IMR-90 (cell line): ENCODE measurements at regions of chr6 and their contacts with region 1.

Region 1: GRCh38 chr6:39664173-39664572 is 61.0 kb downstream of the KIF6 start:
- DNase-seq: no peak
- ATAC-seq: no peak
- H3K4me3 ChIP-seq: no peak overlapping the region
- H3K27ac ChIP-seq: no peak overlapping the region
- H3K4me1 ChIP-seq: no peaks in the 10 kb centered on the region
- H3K27me3 ChIP-seq: no peaks in the 10 kb centered on the region
- CTCF ChIP-seq: no peak
- POLR2A ChIP-seq: no peak
- RAD21 ChIP-seq: no peak

Region 2: DNA sequence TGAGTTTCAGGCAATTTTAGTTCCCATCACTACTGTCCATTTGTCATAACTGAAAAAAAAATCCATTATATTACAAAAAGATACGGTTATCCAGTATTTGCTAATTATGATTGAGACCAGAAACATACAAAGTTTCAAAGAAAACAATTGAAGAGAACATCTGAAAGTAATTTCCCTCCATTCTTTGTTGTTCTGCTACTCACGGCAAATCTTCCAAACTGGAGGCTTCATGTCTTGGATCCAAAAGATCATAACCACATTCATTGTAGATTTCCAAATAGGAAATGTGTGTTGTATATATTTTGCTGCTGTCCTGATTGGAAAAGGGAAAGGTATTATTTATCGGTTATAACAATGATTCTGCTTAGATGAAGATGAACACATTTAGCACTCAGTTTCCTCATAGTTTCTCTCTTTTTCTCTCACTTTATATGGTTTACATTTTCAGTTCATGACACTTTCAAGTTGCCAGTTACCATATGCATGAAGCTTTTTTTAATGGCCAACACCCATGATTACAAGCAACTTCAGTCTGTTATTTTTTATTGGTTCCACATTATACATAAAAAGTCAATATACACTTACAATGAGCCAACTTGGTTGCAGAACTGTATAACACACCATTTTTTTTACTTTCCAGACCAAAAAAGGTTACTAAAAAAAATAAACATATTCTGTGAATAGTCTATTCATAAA is 29.4 kb before region 1 on chr6:
- CTCF ChIA-PET with region 1: interaction called, 11 read pairs
- POLR2A ChIA-PET with region 1: no interaction called
- dilution Hi-C with region 1: no loop called
- in situ Hi-C with region 1: no loop called
- intact Hi-C with region 1: no loop called
- DNase-seq: no peak
- ATAC-seq: no peak
- H3K4me3 ChIP-seq: no peak overlapping the region
- H3K27ac ChIP-seq: no peak overlapping the region
- H3K4me1 ChIP-seq: no peaks in the 10 kb centered on the region
- H3K27me3 ChIP-seq: no peaks in the 10 kb centered on the region
- CTCF ChIP-seq: no peak
- POLR2A ChIP-seq: no peak
- RAD21 ChIP-seq: no peak